HEK293 (cell line): ENCODE measurements at regions of chr1 and their contacts with region 1.

Region 1: DNA sequence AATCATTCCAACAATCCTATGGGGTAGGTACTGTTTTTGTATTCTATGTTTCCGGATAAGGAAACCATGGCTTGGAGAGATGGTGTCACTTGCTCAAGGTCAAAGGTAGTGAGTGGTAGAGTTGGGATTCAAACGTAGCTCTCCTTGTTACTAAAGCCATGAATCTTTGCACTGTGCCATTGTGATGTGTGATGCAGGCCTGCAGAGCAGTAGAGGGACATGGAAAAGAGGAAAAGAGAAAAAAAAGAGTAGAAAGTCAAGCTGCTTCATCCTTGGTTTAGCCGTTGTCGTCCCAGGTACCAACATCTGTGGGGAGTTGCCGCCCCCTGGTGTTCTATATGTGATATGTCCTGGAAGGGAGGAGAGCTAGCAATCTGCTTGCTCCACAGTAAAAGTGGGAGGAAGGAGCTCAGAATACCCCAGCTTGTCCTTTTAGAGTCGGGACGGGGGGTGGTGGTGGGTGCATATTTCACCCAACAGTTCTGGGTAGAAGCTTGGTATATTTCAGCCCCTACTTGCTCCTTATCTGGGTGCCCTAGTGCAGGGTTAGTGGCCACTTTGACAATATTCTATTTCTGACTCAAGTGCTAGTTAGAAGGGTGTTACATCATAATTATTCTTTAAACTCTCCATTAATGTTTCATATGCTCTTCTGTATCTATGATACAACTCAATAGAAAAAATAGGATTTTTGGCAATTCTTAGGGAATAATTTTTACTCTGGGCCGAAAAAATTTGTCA is 98.4 kb downstream of the EBNA1BP2 start:
- H3K4me3 ChIP-seq: no peak overlapping the region
- H3K27ac ChIP-seq: no peak overlapping the region
- H3K4me1 ChIP-seq: no peaks in the 10 kb centered on the region
- CTCF ChIP-seq: peak; percentile 73

Region 2: GRCh38 chr1:42777852-42778251 is 295.8 kb before region 1 on chr1:
- CTCF ChIA-PET with region 1: interaction called, 79 read pairs
- POLR2A ChIA-PET with region 1: no interaction called
- H3K4me3 ChIP-seq: no peak overlapping the region
- H3K27ac ChIP-seq: no peak overlapping the region
- H3K4me1 ChIP-seq: no peaks in the 10 kb centered on the region
- CTCF ChIP-seq: peak; percentile 64

Region 3: GRCh38 chr1:42913426-42914091 is 160.1 kb before region 1 on chr1:
- CTCF ChIA-PET with region 1: interaction called, 298 read pairs
- POLR2A ChIA-PET with region 1: no interaction called
- H3K4me3 ChIP-seq: no peak overlapping the region
- H3K27ac ChIP-seq: no peak overlapping the region
- H3K4me1 ChIP-seq: no peaks in the 10 kb centered on the region
- CTCF ChIP-seq: peak; percentile 39; the same call in 1 of the 2 replicates

Region 4: DNA sequence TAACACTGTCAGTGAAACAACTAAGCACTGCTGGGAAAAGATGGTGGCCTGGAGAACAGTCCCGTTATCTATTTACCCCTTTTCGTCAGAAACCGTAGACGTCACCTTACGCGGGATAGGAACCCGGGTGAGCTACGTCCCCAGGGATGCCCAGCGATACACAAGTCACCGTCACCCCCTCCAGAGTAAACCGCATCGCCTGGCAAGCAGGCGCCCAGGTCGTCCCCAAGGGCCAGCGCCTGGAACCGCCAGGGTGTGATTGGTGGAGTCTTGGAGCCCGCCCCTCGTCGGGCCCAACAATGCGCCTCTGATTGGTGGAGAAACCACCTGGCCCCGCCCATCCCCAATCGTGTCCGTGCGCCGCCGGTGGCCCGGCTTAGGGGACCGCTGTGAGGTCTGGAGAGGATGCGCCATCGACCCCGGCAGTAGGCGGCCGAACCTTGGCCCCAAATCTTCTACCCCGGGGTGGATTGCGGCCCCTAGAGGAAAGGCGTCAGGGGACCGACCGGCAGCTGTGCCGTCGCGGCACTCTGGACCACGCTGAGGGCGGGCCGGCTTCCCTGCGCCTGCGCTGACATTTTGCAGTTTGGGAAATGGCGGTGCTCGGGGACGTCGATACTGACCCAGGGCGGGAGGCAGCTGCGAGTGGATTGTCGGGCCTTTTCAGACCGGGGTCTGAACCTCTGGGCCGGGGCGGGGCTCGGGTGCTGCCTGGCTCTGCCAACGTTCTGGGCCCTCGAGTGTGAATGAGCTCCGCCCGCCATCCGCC is 149.4 kb before region 1 on chr1:
- CTCF ChIA-PET with region 1: interaction called, 70 read pairs
- POLR2A ChIA-PET with region 1: interaction called, 7 read pairs
- H3K4me3 ChIP-seq: peak overlapping the region; percentile 63
- H3K27ac ChIP-seq: peak overlapping the region; percentile 72; the same call in 1 of the 2 replicates
- H3K4me1 ChIP-seq: peaks cover 5% of the 10 kb centered on the region; the same call in 1 of the 2 replicates
- CTCF ChIP-seq: peak; percentile 97

Region 5: DNA sequence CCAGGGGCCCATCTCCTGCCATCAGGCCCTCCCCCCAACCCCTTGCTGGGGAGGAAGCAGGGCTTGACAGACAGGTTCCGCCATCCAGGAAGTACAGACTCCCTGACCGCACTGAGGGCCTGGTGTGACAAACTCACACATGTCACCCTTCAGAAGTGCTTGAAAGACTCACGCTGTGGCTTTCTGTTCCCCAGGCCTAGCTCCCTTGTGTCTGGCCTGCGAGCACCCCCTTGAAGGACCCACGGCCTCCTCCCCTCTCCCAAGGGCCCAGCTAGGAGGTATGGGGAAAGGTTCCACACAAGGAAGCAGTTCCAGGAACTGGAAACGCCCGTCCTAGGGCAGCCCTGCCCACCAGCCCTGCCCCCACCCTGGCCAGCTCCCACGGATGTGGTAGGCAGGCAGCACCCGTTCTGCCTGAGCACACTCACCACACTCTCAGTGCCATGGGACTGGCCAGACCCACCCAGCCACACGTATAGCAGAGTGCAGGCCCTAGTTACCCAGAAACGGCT is 141.7 kb before region 1 on chr1:
- CTCF ChIA-PET with region 1: interaction called, 70 read pairs
- POLR2A ChIA-PET with region 1: no interaction called
- H3K4me3 ChIP-seq: no peak overlapping the region
- H3K27ac ChIP-seq: no peak overlapping the region
- H3K4me1 ChIP-seq: no peaks in the 10 kb centered on the region
- CTCF ChIP-seq: no peak

Region 6: DNA sequence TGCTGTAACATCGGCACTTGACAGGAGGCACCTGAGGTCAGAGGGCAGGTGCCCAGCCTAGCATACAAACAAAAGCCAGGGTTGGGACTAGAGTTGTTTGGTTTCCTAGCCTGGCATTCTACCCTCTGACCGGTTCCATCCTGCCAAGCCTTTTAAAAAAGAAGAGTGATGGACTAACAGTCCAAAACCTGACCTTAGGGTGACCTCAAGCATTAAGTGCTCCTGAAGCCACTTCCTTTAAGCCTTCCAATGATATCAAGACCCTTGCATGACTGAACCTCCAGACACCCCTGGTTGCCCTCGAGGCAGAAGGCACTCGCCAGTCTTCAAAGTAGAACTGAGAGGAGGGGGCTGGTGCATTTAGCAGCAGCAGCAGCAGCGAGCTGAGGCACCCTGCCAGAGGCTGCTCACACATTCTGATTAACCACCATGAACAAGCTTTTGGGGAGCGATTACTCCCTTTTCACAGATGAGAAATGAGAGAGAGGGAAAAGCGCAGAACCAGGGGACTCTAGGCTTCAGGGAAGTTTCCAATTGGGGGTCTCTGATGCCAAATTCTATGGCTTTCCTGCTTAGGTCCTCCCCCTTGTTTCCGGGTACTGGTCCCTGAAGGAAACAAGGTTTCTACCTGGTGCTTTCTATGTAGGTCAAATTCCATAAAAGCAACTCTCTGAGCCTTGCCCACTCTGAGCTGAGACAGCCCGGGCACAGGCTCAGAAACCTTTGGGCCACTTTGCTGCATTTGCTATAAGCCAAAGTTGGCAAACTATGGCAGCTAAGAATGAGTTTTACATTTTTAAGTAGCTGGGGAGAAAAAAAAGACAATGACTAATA is 124.1 kb before region 1 on chr1:
- CTCF ChIA-PET with region 1: interaction called, 12 read pairs
- POLR2A ChIA-PET with region 1: no interaction called
- H3K4me3 ChIP-seq: no peak overlapping the region
- H3K27ac ChIP-seq: no peak overlapping the region
- H3K4me1 ChIP-seq: no peaks in the 10 kb centered on the region
- CTCF ChIP-seq: no peak

Region 7: GRCh38 chr1:42957577-42958487 is 115.8 kb before region 1 on chr1:
- CTCF ChIA-PET with region 1: interaction called, 10 read pairs
- POLR2A ChIA-PET with region 1: interaction called, 6 read pairs
- H3K4me3 ChIP-seq: peak overlapping the region; percentile 77
- H3K27ac ChIP-seq: peak overlapping the region; percentile 82
- H3K4me1 ChIP-seq: peaks cover 9% of the 10 kb centered on the region; the same call in 1 of the 2 replicates
- CTCF ChIP-seq: no peak